Activated B cell treated with CpG ODN at 0.5 μM for 24 hours (primary cell): ENCODE measurements at regions of chr15 and their contacts with region 1.

Region 1: GRCh38 chr15:89575146-89575655 is at the start of gene TICRR:
- DNase-seq: peak; percentile 80
- ATAC-seq: peak; percentile 97
- H3K4me3 Mint-ChIP-seq: peak within 1 kb of the TSS; percentile 82
- H3K27ac Mint-ChIP-seq: peak within 1 kb of the TSS; percentile 31
- H3K4me1 Mint-ChIP-seq: peaks cover 11% of the 10 kb centered on the region
- H3K27me3 Mint-ChIP-seq: peaks cover 10% of the 10 kb centered on the region
- CTCF ChIP-seq: no peak
- total RNA-seq, gene TICRR: 0.69 TPM in 2 replicates

Region 2: GRCh38 chr15:89690276-89691218 is 115.3 kb after region 1 on chr15 and contains the starts of genes PEX11A and WDR93:
- CTCF ChIA-PET with region 1: no interaction called
- POLR2A ChIA-PET with region 1: no interaction called
- intact Hi-C with region 1: loop called (anchors 10 kb)
- DNase-seq: peak; percentile 73
- ATAC-seq: peak; percentile 91
- H3K4me3 Mint-ChIP-seq: peak within 1 kb of the TSS; percentile 90
- H3K27ac Mint-ChIP-seq: peak within 1 kb of the TSS; percentile 77
- H3K4me1 Mint-ChIP-seq: peaks cover 19% of the 10 kb centered on the region
- H3K27me3 Mint-ChIP-seq: no peaks in the 10 kb centered on the region
- CTCF ChIP-seq: no peak
- total RNA-seq, gene PEX11A: 0.84 and 1.6 TPM in 2 replicates
- total RNA-seq, gene WDR93: 0.10 and 0.16 TPM in 2 replicates

Region 3: DNA sequence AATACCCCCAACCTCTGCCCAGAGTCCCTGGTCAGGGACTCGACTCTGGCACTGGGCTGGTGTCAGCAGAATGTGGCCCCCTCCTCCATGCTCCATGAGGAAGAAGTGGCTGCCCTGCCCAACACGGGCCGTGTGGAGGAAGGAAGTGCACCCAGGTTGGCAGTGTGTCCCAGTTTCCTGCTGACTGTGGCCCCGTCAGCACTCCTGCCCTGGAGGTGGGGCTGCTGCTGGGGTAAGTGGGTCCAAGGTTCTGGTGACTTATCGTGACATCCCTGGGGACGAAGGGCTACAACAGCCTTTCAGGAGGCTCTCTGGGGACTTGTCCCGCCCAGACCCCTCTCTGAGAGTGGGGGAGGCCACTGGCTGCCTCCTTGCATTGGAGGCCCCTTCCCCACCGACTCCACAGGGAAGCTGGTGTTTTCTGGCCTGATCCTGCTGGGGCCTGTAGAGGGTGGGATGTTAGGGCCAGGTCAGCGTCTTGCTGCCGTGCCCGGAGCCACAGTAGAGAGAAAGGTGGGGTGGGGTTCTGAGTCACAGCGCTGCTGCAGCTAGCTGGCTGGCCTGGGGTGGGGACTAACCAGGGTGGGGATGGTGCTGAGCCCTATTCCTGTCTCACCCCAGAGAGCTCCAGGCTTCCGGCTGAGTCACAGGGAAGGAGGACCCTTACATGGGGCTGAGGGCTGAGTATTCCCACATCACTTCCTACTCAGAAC is 636.4 kb after region 1 on chr15:
- CTCF ChIA-PET with region 1: no interaction called
- POLR2A ChIA-PET with region 1: no interaction called
- intact Hi-C with region 1: no loop called
- DNase-seq: no peak
- ATAC-seq: no peak
- H3K4me3 Mint-ChIP-seq: peak overlapping the region; percentile 47
- H3K27ac Mint-ChIP-seq: peak overlapping the region; percentile 95
- H3K4me1 Mint-ChIP-seq: peaks cover 95% of the 10 kb centered on the region
- H3K27me3 Mint-ChIP-seq: no peaks in the 10 kb centered on the region
- CTCF ChIP-seq: no peak